ENCODE measurements at regions of chr4 and their contacts with region 1.

Region 1: GRCh38 chr4:83252782-83253405 is 31.7 kb downstream of the COQ2 start:
- DNase-seq: peak; percentile 56 to 78 (median 75)
- H3K4me3 ChIP-seq: no peak overlapping the region
- H3K4me3 Mint-ChIP-seq: peak overlapping the region in 4 of 7 donors; percentile 23 to 79 (median 36)
- H3K27ac ChIP-seq: no peak overlapping the region
- H3K27ac Mint-ChIP-seq: peak overlapping the region in 7 of 8 donors; percentile 42 to 85 (median 68)
- H3K4me1 ChIP-seq: peaks cover 13% of the 10 kb centered on the region
- H3K4me1 Mint-ChIP-seq: peaks cover 21 to 27% (median 24%) of the 10 kb centered on the region in 3 donors
- H3K27me3 ChIP-seq: no peaks in the 10 kb centered on the region
- H3K27me3 Mint-ChIP-seq: no peaks in the 10 kb centered on the region

Region 2: DNA sequence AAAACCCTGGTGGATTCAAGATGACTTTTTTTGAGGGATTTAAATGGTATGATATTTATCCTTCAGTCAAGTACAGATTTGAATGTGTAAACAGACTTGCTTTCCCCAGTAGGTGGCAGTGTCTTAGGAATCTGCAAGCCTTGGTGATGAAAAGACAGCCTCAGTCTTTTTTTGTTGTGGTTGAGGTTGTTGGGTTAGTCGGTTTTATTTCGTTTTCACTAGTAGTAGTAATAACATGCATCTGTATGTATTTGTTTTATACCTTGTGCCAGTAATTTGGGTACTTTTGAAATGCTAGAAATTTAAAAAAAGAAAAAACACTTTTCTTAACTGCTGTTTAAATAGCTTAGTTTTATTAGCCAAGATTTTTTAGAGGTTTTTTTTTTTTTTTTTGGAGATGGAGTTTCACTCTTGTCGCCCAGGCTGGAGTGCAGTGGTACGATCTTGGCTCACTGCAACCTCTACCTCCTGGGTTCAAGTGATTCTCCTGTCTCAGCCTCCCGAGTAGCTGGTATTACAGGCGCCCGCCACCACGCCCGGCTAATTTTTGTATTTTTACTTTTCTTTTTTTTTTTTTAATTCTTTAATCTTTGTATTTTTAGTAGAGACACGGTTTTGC is 178.7 kb before region 1 on chr4:
- CTCF ChIA-PET with region 1: interaction called, 46 read pairs
- POLR2A ChIA-PET with region 1: no interaction called
- DNase-seq: peak; percentile 10 to 88 (median 71)
- H3K4me3 ChIP-seq: no peak overlapping the region
- H3K4me3 Mint-ChIP-seq: peak overlapping the region; percentile 19 to 82 (median 75)
- H3K27ac ChIP-seq: no peak overlapping the region
- H3K27ac Mint-ChIP-seq: peak overlapping the region in 7 of 8 donors; percentile 38 to 72 (median 66)
- H3K4me1 ChIP-seq: no peaks in the 10 kb centered on the region
- H3K4me1 Mint-ChIP-seq: peaks cover 6 to 16% (median 12%) of the 10 kb centered on the region in 3 donors
- H3K27me3 ChIP-seq: no peaks in the 10 kb centered on the region
- H3K27me3 Mint-ChIP-seq: no peaks in the 10 kb centered on the region

Region 3: GRCh38 chr4:83083925-83084475 is 168.9 kb before region 1 on chr4:
- CTCF ChIA-PET with region 1: interaction called, 13 read pairs
- POLR2A ChIA-PET with region 1: no interaction called
- DNase-seq: peak; percentile 26 to 82 (median 64)
- H3K4me3 ChIP-seq: peak overlapping the region; percentile 1
- H3K4me3 Mint-ChIP-seq: peak overlapping the region; percentile 17 to 73 (median 57)
- H3K27ac ChIP-seq: no peak overlapping the region
- H3K27ac Mint-ChIP-seq: peak overlapping the region; percentile 82 to 97 (median 90)
- H3K4me1 ChIP-seq: peaks cover 27% of the 10 kb centered on the region
- H3K4me1 Mint-ChIP-seq: peaks cover 36 to 44% (median 40%) of the 10 kb centered on the region in 3 donors
- H3K27me3 ChIP-seq: no peaks in the 10 kb centered on the region
- H3K27me3 Mint-ChIP-seq: no peaks in the 10 kb centered on the region

Region 4: DNA sequence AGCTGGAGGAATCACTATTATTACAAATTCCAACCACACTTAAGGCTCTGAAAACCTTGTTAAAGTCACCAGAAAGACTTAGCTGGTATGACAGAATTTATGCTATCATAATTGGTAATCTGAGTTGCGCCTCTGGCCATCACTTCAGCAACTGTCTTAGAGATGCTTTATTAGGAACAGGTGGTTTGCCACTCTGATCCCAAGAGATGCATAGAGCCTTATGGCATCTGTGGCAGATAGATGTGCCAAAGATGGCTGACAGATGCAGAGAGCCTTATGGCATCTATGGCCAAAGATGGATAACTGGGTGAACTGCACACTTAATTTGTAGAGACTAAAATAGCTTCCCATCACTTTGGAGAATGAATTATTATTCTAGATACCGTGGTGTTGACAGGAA is 106.1 kb before region 1 on chr4:
- CTCF ChIA-PET with region 1: interaction called, 11 read pairs
- POLR2A ChIA-PET with region 1: no interaction called
- DNase-seq: no peak
- H3K4me3 ChIP-seq: no peak overlapping the region
- H3K4me3 Mint-ChIP-seq: no peak overlapping the region
- H3K27ac ChIP-seq: no peak overlapping the region
- H3K27ac Mint-ChIP-seq: no peak overlapping the region
- H3K4me1 ChIP-seq: no peaks in the 10 kb centered on the region
- H3K4me1 Mint-ChIP-seq: peaks cover 14 to 18% (median 15%) of the 10 kb centered on the region in 3 donors
- H3K27me3 ChIP-seq: no peaks in the 10 kb centered on the region
- H3K27me3 Mint-ChIP-seq: no peaks in the 10 kb centered on the region

Region 5: GRCh38 chr4:83212041-83212851 is 40.6 kb before region 1 on chr4:
- CTCF ChIA-PET with region 1: interaction called, 19 read pairs
- POLR2A ChIA-PET with region 1: no interaction called
- DNase-seq: peak; percentile 50 to 91 (median 86)
- H3K4me3 ChIP-seq: peak overlapping the region; percentile 21
- H3K4me3 Mint-ChIP-seq: peak overlapping the region; percentile 6 to 77 (median 71)
- H3K27ac ChIP-seq: peak overlapping the region; percentile 38
- H3K27ac Mint-ChIP-seq: peak overlapping the region in 7 of 8 donors; percentile 24 to 95 (median 89)
- H3K4me1 ChIP-seq: peaks cover 79% of the 10 kb centered on the region
- H3K4me1 Mint-ChIP-seq: peaks cover 75 to 87% (median 80%) of the 10 kb centered on the region in 3 donors
- H3K27me3 ChIP-seq: no peaks in the 10 kb centered on the region
- H3K27me3 Mint-ChIP-seq: peaks cover 0 to 1% of the 10 kb centered on the region in 2 donors

Region 6: DNA sequence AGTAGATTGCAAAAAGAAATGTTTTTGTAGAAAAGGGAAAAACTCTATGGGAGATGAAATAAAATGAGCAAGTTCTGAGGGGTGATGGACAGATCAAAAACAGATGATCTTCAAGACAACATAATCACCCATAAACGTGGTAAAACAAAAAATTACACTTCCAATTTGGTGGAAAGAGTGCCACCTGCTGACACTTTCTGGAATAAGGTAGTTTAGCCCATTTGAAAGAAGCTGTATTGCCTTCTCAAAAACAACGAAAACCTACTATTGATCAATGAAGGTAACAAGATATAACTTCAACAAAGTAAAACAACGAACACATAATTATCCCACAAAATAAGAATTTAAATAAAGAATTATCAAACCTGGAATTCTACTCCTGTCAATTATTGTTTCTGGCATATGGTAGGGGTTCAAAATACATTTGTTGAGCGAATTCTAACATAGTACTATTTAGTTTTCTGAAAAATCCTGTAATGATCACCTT is 29.2 kb after region 1 on chr4:
- CTCF ChIA-PET with region 1: no interaction called
- POLR2A ChIA-PET with region 1: no interaction called
- DNase-seq: peak; percentile 17 to 62 (median 48)
- H3K4me3 ChIP-seq: no peak overlapping the region
- H3K4me3 Mint-ChIP-seq: peak overlapping the region in 4 of 7 donors; percentile 39 to 54 (median 52)
- H3K27ac ChIP-seq: no peak overlapping the region
- H3K27ac Mint-ChIP-seq: peak overlapping the region in 4 of 8 donors; percentile 3 to 72 (median 10)
- H3K4me1 ChIP-seq: peaks cover 12% of the 10 kb centered on the region
- H3K4me1 Mint-ChIP-seq: peaks cover 37 to 47% (median 39%) of the 10 kb centered on the region in 3 donors
- H3K27me3 ChIP-seq: no peaks in the 10 kb centered on the region
- H3K27me3 Mint-ChIP-seq: no peaks in the 10 kb centered on the region

Region 7: GRCh38 chr4:83340692-83341343 is 87.9 kb after region 1 on chr4:
- CTCF ChIA-PET with region 1: no interaction called
- POLR2A ChIA-PET with region 1: no interaction called
- DNase-seq: peak; percentile 3 to 60 (median 49)
- H3K4me3 ChIP-seq: no peak overlapping the region
- H3K4me3 Mint-ChIP-seq: peak overlapping the region in 6 of 7 donors; percentile 12 to 55 (median 29)
- H3K27ac ChIP-seq: no peak overlapping the region
- H3K27ac Mint-ChIP-seq: peak overlapping the region in 4 of 8 donors; percentile 7 to 55 (median 50)
- H3K4me1 ChIP-seq: peaks cover 14% of the 10 kb centered on the region
- H3K4me1 Mint-ChIP-seq: peaks cover 18 to 30% (median 26%) of the 10 kb centered on the region in 3 donors
- H3K27me3 ChIP-seq: no peaks in the 10 kb centered on the region
- H3K27me3 Mint-ChIP-seq: peaks cover 15 to 38% of the 10 kb centered on the region in 2 donors

Region 8: DNA sequence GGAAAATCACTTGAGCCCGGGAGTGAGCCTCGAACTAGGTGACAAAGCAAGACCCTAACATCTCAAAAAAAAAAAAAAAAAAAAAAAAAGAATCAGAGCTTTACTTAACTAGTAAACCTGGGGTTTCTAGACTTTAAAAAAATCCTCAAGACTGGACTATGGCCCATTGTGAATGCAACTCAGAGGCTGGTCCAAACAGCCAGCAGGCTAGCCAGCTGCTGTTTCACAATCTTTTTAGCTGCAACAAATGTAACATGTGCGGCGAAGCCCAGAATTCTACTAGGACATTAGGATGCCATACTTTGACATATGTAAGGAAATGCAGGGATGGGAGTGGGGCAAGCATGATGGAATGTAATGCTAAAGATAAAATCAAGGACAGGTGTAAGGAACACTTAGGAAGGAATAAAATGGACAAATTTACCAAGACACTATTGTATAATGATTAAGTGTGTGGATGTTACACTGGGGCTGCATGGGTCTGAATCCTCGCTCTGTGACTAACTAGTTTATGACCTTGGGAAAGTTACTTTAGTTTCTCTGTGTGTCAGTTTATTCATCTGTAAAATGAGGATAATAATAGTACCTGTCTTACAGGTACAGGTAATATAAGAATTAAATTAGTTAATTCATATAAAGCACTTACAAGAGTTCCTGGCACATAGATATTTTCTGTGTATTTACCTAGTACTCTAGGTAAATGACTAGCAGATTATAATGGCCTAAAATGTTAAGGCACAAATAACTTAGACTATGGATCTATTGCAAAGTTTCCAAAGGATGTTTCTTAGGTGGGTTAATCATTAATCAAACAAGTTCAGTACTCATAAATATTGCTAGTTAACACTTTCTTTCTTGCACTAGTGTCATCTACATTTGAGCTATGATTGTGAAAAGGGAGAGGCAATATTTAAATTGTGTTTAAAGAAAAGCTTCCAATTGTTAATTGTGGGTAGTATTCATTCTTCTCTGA is 153.2 kb after region 1 on chr4:
- CTCF ChIA-PET with region 1: no interaction called
- POLR2A ChIA-PET with region 1: no interaction called
- DNase-seq: no peak
- H3K4me3 ChIP-seq: no peak overlapping the region
- H3K4me3 Mint-ChIP-seq: no peak overlapping the region
- H3K27ac ChIP-seq: no peak overlapping the region
- H3K27ac Mint-ChIP-seq: no peak overlapping the region
- H3K4me1 ChIP-seq: no peaks in the 10 kb centered on the region
- H3K4me1 Mint-ChIP-seq: peaks cover 0 to 6% (median 4%) of the 10 kb centered on the region in 3 donors
- H3K27me3 ChIP-seq: no peaks in the 10 kb centered on the region
- H3K27me3 Mint-ChIP-seq: no peaks in the 10 kb centered on the region

Region 9: GRCh38 chr4:83455281-83456129 is 202.6 kb after region 1 on chr4 and contains the starts of genes HELQ and MRPS18C:
- CTCF ChIA-PET with region 1: no interaction called
- POLR2A ChIA-PET with region 1: no interaction called
- DNase-seq: peak; percentile 90 to 99 (median 96)
- H3K4me3 ChIP-seq: peak within 1 kb of the TSS; percentile 80
- H3K4me3 Mint-ChIP-seq: peak within 1 kb of the TSS; percentile 98 to 100 (median 100)
- H3K27ac ChIP-seq: peak within 1 kb of the TSS; percentile 99
- H3K27ac Mint-ChIP-seq: peak within 1 kb of the TSS; percentile 100
- H3K4me1 ChIP-seq: peaks cover 35% of the 10 kb centered on the region
- H3K4me1 Mint-ChIP-seq: peaks cover 43 to 73% (median 67%) of the 10 kb centered on the region in 3 donors
- H3K27me3 ChIP-seq: no peaks in the 10 kb centered on the region
- H3K27me3 Mint-ChIP-seq: peaks cover 0 to 2% of the 10 kb centered on the region in 2 donors
- total RNA-seq, gene HELQ: 14.0 to 15.3 TPM
- total RNA-seq, gene MRPS18C: 86.0 to 87.2 TPM